ENCODE measurements at regions of chr7 and their contacts with region 1.

Region 1: DNA sequence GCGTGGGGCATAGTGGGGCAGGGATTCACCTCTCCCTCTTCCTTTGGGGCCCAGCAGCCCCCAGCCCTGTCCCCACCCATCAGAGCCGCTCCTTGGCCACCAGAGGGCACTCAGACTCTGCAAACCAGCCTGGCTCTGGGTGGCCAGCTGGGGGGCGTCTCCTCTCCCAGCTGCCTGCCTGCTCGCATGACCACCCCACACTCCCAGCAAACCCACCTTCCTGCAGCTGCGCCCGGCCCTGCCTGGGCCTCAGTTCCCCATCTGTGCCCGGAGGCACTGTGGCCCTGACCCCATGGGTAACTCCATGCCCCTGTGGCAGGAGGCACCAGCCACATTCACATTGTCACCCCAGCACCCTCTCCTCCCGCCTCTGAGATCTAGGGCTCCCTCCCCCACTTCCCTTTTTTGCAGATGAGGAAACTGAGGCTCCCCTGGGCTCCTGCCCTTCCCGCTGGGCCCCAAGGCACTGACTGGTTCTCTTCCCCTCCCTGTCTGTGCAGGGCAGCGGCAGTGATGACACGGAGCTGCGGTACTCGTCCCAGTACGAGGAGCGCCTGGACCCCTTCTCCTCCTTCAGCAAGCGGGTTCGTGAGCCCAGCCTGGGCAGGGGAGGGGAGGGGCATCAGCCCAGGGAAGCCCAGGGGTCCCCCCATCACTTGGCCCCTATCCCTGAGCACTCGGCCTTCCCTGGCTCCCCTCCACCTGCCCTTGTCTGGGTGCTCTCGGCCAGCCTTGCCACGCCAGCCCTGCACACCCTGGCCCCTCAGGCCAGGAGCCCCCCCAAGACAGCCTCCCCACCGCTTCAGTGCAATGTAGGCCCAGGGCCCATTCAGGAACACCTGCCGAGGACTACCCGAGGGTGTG is 6.9 kb upstream of the SH2B2 start:
- DNase-seq: no peak
- H3K4me3 ChIP-seq: no peak overlapping the region
- CTCF ChIP-seq: peak; percentile 87

Region 2: DNA sequence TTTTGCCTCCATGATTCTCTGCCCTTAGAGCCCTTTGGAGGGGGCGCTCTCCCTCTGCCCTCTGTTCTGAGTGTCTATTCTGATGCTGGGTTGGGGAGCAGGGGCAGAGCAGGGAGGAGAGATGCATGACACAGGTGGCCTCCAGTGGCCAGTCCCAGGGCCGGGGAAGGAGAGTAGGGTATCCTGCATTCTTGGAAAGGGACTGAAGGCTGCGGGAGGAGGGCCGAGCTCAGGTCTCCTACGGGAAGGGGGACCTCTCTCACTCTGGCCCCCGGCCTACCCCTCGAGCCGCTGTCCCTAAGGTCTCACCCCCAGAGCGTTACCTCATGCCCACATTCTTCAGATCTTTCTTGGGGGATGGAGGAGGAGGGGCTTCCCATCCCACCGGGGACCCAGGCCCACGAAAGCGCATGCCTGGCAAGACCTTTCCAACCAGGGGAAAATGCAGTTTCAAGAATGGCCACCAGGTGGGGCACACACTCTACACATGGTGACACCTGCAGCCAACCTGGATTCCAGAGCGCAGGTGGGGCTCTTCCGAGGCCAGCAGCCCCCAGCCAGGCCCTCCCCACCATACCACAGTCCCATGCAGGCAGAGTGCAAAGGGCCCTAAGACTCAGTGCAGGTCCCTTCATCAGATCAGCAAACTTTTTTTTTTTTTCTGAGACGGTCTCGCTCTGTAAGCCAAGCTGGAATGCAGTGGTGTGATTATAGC is 737.1 kb before region 1 on chr7:
- CTCF ChIA-PET with region 1: interaction called, 98 read pairs
- POLR2A ChIA-PET with region 1: no interaction called
- DNase-seq: no peak
- H3K4me3 ChIP-seq: no peak overlapping the region
- CTCF ChIP-seq: peak; percentile 85

Region 3: GRCh38 chr7:102396027-102397019 is 116.6 kb after region 1 on chr7 and contains the start of gene PRKRIP1:
- CTCF ChIA-PET with region 1: interaction called, 228 read pairs
- POLR2A ChIA-PET with region 1: interaction called, 3 read pairs
- DNase-seq: peak; percentile 41
- H3K4me3 ChIP-seq: peak within 1 kb of the TSS; percentile 95
- CTCF ChIP-seq: no peak